Head of caudate nucleus (tissue), 42 donors: ENCODE measurements at regions of chr5 and their contacts with region 1.

Region 1: GRCh38 chr5:112921833-112922817 is at the start of gene REEP5:
- DNase-seq: peak; percentile 52 to 91 (median 82)

Region 2: GRCh38 chr5:112551419-112552032 is 370.6 kb before region 1 on chr5:
- intact Hi-C with region 1: loop called (anchors 10 kb)
- DNase-seq: peak in 25 of 42 donors; percentile 30 to 85 (median 63)

Region 3: DNA sequence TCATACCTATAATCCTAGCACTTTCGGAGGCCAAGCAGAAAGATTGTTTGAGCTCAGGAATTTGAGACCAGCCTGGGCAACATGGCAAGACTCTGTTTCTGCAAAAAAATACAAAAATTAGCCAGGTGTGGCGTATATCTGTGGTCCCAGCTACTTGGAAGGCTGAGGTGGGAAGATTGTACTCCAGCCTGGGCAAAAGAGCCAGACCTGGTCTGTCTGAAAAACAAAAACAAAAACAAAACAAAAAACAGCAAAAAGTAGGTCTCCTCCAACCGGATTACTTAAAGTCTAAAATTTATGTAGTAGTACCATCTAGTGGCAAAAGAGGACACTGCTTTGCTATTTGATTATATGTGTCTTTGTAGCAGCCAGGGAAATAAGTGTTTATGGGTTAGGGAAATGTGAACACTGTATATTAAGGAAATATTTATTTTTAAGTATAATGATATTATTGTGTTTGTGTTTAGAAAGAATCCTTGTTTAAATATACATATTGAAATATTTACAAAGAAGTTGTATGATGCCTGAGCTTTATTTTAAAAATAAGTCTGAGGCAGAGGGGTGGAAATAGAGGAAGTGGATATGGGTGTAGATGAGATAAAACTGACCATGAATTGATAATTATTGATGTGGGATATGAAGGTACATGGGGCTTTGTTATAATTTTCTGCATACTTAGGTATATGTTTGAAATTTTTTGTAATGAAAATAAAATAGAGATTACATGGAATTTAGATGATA is 164.5 kb before region 1 on chr5:
- intact Hi-C with region 1: loop called (anchors 10 kb)
- DNase-seq: peak in 2 of 42 donors; percentile 10 to 25

Region 4: GRCh38 chr5:112860929-112861637 is 61.0 kb before region 1 on chr5 and contains the start of gene SRP19:
- intact Hi-C with region 1: loop called (anchors 2 kb)
- DNase-seq: peak; percentile 91 to 98 (median 96)

Region 5: GRCh38 chr5:112976432-112977309 is 54.5 kb after region 1 on chr5 and contains the start of gene DCP2:
- intact Hi-C with region 1: loop called (anchors 5 kb)
- DNase-seq: peak; percentile 88 to 98 (median 94)